CD8-positive, alpha-beta memory T cell (primary cell): ENCODE measurements at regions of chr6 and their contacts with region 1.

Region 1: DNA sequence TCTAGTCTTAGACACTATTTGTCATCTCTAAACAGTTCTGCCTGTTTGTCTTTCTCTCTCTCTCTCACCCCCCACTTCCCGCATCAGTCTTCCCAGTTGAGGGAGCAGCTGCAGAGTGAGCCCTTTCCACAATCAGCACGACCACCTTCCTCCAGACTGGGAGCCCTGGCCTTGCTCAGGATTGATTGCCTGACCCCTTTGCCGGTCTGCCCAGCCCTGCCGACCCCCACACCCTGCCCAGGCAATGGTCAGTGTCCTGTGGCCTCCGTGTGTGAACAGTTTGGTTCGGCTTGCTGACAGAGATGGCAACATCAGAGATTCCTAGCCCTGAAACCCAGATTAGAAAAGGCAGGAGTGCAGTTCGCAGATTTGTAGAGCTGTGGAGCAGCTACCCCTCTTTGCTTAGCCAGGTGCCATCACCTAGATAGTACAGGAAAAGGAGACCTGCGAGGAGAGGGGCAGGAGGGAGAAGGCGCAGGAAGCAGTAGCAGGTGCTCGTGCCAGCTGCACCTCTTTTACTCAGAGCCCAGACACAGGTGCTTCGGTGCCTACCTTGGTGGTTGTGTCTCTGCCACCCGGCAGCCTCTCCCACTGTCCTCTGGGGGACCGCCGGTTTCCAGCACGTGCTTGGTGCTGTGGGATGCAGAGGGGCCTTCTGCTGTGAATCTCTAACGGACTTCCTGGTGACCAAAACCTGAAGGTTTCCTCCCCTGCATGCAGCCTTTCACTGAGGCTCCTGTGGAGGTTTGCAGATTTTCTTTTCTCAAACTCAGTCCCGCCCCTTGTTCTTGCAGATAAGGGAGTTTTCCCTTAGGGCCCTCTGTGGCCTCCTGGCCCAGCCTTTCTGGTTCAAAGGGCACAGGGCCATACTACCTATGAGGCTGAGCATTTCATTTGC is 92.4 kb downstream of the SCML4 start:
- DNase-seq: peak in 1 of 5 donors; percentile 53
- H3K4me3 ChIP-seq: peak overlapping the region; percentile 87
- H3K4me3 Mint-ChIP-seq: peak overlapping the region; percentile 92 to 98 (median 95)
- H3K27ac ChIP-seq: peak overlapping the region; percentile 20
- H3K27ac Mint-ChIP-seq: peak overlapping the region; percentile 90 to 96 (median 92)
- H3K4me1 ChIP-seq: peaks cover 81% of the 10 kb centered on the region
- H3K4me1 Mint-ChIP-seq: peaks cover 87 to 100% (median 96%) of the 10 kb centered on the region in 3 donors
- H3K27me3 ChIP-seq: no peaks in the 10 kb centered on the region
- H3K27me3 Mint-ChIP-seq: peaks cover 0 to 3% of the 10 kb centered on the region in 2 donors

Region 2: DNA sequence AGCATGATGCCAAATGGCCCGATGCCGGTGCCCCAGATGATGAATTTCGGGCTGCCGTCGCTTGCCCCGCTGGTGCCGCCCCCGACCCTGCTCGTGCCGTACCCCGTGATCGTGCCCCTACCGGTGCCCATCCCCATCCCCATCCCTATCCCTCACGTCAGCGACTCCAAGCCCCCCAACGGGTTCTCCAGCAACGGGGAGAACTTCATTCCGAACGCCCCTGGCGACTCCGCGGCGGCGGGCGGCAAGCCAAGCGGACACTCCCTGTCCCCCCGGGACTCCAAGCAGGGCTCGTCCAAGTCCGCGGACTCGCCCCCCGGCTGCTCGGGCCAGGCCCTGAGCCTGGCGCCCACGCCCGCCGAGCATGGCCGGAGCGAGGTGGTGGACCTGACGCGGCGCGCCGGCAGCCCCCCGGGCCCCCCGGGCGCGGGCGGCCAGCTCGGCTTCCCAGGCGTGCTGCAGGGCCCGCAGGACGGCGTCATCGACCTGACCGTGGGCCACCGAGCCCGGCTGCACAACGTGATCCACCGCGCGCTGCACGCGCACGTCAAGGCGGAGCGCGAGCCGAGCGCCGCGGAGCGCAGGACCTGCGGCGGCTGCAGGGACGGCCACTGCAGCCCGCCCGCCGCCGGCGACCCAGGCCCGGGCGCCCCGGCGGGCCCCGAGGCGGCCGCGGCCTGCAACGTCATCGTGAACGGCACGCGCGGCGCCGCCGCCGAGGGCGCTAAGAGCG is 97.2 kb before region 1 on chr6:
- CTCF ChIA-PET with region 1: no interaction called
- POLR2A ChIA-PET with region 1: no interaction called
- DNase-seq: peak in 1 of 5 donors; percentile 15
- H3K4me3 ChIP-seq: no peak overlapping the region
- H3K4me3 Mint-ChIP-seq: peak overlapping the region; percentile 34 to 80 (median 72)
- H3K27ac ChIP-seq: no peak overlapping the region
- H3K27ac Mint-ChIP-seq: peak overlapping the region in 1 of 8 donors; percentile 79
- H3K4me1 ChIP-seq: no peaks in the 10 kb centered on the region
- H3K4me1 Mint-ChIP-seq: peaks cover 7 to 18% (median 16%) of the 10 kb centered on the region in 3 donors
- H3K27me3 ChIP-seq: peaks cover 8% of the 10 kb centered on the region
- H3K27me3 Mint-ChIP-seq: peaks cover 29 to 64% of the 10 kb centered on the region in 2 donors

Region 3: DNA sequence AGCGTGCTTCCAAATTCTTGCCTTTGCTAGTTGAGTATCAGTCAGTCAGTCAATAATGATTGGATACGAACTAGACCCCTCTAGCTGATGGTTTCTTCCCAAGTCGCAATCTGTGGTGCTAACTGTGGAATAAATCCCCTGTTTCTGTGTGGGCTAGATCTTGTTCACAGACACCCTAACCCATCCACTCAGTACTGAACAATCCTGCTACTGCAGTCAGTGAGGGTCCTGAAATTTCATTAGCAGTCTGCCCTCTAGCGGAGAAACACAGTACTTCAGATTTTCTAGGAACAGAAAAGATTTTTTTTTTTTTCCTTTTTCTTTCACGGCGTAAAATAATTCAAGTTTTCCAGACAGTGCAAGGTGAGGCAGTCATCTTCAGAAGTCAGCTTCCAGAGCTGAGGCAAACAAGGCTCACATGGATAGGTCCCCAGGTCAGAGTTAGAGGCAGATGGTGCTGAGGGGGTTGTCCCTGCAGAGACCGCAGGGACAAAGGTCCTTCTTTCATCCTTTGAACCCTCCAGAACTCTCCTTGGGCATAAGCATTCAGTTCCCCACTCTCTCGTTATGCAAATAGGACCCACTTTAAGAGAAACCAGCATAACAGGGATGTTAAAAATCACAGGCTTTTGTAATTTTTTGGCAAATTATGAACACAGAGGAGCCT is 27.2 kb before region 1 on chr6:
- CTCF ChIA-PET with region 1: interaction called, 18 read pairs
- POLR2A ChIA-PET with region 1: no interaction called
- DNase-seq: peak in 1 of 5 donors; percentile 36
- H3K4me3 ChIP-seq: no peak overlapping the region
- H3K4me3 Mint-ChIP-seq: no peak overlapping the region
- H3K27ac ChIP-seq: no peak overlapping the region
- H3K27ac Mint-ChIP-seq: peak overlapping the region in 7 of 8 donors; percentile 17 to 79 (median 46)
- H3K4me1 ChIP-seq: peaks cover 11% of the 10 kb centered on the region
- H3K4me1 Mint-ChIP-seq: peaks cover 29 to 46% (median 33%) of the 10 kb centered on the region in 3 donors
- H3K27me3 ChIP-seq: no peaks in the 10 kb centered on the region
- H3K27me3 Mint-ChIP-seq: no peaks in the 10 kb centered on the region

Region 4: DNA sequence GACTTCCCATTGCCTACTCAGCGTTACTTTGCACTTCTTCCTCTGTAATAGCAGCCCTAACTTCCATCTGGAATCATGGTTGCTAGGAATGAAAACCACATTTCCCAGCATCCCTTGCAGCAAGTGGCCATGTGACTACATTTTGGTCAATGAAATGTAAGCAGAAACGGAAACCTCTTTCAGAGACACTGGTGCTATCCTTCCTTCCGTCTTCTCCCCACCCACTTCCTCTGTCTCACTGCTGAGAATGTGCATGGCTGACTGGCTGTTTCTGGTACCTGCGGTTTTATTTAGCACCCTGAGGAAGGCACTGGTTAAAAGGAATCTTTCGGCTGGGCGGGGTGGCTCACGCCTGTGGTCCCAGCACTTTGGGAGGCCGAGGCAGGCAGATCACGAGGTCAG is 15.0 kb before region 1 on chr6:
- CTCF ChIA-PET with region 1: interaction called, 10 read pairs
- POLR2A ChIA-PET with region 1: interaction called, 11 read pairs
- DNase-seq: peak; percentile 63 to 90 (median 83)
- H3K4me3 ChIP-seq: no peak overlapping the region
- H3K4me3 Mint-ChIP-seq: peak overlapping the region; percentile 41 to 83 (median 66)
- H3K27ac ChIP-seq: peak overlapping the region; percentile 66
- H3K27ac Mint-ChIP-seq: peak overlapping the region; percentile 87 to 98 (median 96)
- H3K4me1 ChIP-seq: peaks cover 68% of the 10 kb centered on the region
- H3K4me1 Mint-ChIP-seq: peaks cover 73 to 89% (median 88%) of the 10 kb centered on the region in 3 donors
- H3K27me3 ChIP-seq: no peaks in the 10 kb centered on the region
- H3K27me3 Mint-ChIP-seq: no peaks in the 10 kb centered on the region

Region 5: DNA sequence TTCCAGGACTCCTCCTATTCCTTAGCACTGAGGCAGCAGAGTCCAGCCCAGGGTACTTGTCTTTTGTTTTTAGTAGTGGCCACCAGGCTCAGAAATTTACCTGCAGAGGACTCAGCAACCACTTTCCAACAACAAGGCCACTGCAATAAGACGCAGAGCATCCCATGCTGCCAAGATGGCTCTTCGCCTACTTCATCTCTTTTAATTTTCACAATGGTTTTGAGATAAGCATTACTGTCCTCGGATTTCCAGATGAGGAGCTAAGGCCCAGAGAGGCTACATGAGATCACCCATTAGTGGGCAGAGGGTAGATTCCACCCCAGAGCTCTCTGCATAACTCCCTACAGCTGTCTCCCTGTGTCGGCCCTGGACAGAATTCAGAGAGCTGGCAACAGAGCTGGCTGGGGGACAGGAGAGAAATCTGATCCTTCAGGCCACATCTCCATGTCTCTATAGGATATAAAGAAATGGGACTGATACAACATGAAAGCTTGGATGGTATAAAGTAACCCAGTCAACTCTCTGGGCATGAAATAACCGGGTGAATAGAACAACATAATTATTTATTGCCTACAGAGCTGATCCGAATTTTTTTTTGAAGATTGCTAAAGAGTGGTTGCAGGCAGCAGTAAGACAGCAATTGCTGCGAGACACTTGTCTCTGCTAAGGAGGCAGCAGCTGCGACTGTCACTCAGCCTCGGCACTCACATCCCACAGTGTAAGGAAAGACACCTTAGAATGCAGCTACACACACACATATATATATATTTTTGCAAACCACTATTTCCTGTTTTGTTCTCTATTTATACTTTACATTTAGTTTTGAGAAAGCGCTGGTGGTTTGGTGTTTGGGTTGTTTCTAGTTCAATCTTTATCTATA is 55.3 kb after region 1 on chr6:
- CTCF ChIA-PET with region 1: interaction called, 21 read pairs
- POLR2A ChIA-PET with region 1: interaction called, 14 read pairs
- DNase-seq: peak; percentile 16 to 72 (median 58)
- H3K4me3 ChIP-seq: peak overlapping the region; percentile 33
- H3K4me3 Mint-ChIP-seq: peak overlapping the region; percentile 61 to 91 (median 84)
- H3K27ac ChIP-seq: peak overlapping the region; percentile 9
- H3K27ac Mint-ChIP-seq: peak overlapping the region; percentile 88 to 96 (median 92)
- H3K4me1 ChIP-seq: peaks cover 85% of the 10 kb centered on the region
- H3K4me1 Mint-ChIP-seq: peaks cover 80 to 90% (median 88%) of the 10 kb centered on the region in 3 donors
- H3K27me3 ChIP-seq: no peaks in the 10 kb centered on the region
- H3K27me3 Mint-ChIP-seq: peaks cover 0 to 2% of the 10 kb centered on the region in 2 donors

Region 6: DNA sequence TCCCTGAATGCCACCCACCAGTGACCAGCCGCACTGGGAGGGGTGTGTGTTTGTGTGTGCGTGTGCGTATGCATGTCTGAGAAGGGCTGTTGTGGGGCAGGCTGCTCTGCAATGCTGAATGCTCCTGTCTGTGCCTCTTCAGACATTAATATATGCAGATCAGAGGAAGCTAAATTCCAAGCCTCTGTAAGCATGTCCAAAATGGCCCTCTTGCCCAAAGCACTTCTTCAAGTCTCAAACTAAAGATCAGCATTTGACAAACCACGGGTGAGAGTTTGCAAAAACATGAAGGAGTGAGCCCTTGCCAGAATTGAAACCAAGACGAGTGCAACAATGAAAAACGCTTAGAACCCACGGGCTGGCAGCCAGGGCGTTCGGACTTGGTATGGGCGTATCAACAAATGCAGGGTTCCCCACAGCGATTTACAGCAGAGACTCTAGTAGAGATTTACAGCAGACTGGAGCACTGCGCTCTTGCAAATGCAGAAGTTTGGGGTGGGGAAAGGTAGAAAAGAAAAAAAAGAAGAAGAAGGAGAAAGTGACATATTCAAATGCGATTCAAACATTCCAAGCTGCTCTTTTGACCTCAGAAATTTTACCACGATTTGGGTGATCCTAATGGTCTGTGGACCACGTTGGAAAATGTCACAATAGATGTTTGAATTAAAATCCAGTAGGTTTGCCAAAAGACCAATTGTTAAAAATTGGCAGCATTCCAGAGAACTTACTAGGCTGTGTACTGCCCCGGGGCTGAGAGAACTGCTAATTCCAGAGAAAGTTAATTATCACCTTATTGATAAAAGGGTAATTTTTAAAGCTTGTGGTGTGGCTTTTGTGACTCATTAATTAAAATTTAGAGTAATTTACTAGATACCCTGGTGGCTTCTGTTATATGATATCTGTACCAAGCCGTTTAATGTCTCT is 88.9 kb after region 1 on chr6:
- CTCF ChIA-PET with region 1: interaction called, 17 read pairs
- POLR2A ChIA-PET with region 1: interaction called, 31 read pairs
- DNase-seq: peak in 4 of 5 donors; percentile 12 to 62 (median 48)
- H3K4me3 ChIP-seq: peak overlapping the region; percentile 68
- H3K4me3 Mint-ChIP-seq: peak overlapping the region; percentile 93 to 97 (median 97)
- H3K27ac ChIP-seq: peak overlapping the region; percentile 92
- H3K27ac Mint-ChIP-seq: peak overlapping the region; percentile 95 to 100 (median 100)
- H3K4me1 ChIP-seq: peaks cover 71% of the 10 kb centered on the region
- H3K4me1 Mint-ChIP-seq: peaks cover 75 to 89% (median 86%) of the 10 kb centered on the region in 3 donors
- H3K27me3 ChIP-seq: no peaks in the 10 kb centered on the region
- H3K27me3 Mint-ChIP-seq: no peaks in the 10 kb centered on the region

Region 7: DNA sequence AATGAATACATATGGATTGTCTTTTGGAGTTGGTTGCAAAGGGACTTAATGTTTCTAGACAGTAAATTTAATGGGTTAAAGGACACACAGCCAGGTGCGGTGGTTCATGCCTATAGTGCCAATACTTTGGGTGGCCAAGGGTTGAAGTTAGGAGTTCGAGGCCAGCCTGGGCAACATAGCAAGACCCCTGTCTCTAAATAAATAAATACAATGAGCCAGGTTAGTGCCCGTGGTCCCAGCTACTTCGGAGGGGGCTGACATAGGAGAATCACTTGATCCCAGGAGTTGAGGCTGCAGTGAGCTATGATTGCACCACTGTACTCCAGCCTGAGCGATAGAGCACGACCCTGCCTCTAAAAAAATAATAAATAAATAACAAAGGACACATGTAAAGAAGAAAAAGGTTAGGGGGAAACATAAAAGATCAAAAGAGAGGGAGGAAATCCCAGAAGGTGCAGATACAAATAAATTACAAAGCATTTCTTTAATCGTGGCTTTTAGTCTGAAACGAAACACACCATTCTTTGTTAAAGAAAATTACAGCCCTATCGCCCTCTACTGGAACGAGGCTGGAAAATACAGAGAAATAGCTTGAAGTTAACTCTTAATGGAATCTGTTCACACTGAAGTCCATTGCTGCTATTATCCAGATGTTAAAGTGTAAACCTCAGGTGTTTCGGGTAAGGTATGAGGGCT is 135.1 kb after region 1 on chr6:
- CTCF ChIA-PET with region 1: interaction called, 15 read pairs
- POLR2A ChIA-PET with region 1: no interaction called
- DNase-seq: peak in 2 of 5 donors; percentile 32 to 50
- H3K4me3 ChIP-seq: no peak overlapping the region
- H3K4me3 Mint-ChIP-seq: peak overlapping the region in 1 of 7 donors; percentile 22
- H3K27ac ChIP-seq: no peak overlapping the region
- H3K27ac Mint-ChIP-seq: peak overlapping the region in 1 of 8 donors; percentile 32
- H3K4me1 ChIP-seq: peaks cover 3% of the 10 kb centered on the region
- H3K4me1 Mint-ChIP-seq: peaks cover 2 to 9% (median 6%) of the 10 kb centered on the region in 3 donors
- H3K27me3 ChIP-seq: peaks cover 4% of the 10 kb centered on the region
- H3K27me3 Mint-ChIP-seq: peaks cover 2 to 13% of the 10 kb centered on the region in 2 donors